ENCODE measurements at regions of chr5 and their contacts with region 1.

Region 1: DNA sequence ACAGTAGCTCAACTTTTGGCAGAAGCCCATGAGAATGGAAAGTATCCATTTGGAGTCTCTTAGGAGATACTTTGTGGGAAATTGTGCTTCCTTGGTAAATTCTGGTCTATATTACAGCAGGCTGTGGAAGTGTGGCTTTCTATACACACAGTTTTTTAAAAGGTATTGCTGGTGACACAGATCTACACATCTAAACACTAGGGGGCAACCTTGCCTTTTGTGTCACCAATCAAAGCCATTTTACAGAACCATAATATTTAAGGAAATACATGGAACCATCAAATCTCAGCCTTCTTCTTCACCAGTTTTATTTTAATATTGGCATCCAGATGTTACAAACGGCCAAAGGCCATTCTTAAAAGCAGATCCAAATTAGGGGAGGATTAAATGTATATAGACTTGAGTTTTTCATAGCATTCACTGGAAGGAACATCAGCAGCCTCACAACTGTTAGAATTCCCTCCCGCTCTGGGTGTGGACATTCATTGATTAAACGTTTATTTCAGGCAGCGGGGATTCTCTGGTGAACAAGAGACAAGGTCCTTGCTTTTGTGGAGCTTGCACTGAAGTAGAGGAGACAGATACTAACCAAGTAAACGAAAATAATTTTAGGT is 132.4 kb upstream of the EPB41L4A start:
- DNase-seq: no peak
- ATAC-seq: no peak

Region 2: DNA sequence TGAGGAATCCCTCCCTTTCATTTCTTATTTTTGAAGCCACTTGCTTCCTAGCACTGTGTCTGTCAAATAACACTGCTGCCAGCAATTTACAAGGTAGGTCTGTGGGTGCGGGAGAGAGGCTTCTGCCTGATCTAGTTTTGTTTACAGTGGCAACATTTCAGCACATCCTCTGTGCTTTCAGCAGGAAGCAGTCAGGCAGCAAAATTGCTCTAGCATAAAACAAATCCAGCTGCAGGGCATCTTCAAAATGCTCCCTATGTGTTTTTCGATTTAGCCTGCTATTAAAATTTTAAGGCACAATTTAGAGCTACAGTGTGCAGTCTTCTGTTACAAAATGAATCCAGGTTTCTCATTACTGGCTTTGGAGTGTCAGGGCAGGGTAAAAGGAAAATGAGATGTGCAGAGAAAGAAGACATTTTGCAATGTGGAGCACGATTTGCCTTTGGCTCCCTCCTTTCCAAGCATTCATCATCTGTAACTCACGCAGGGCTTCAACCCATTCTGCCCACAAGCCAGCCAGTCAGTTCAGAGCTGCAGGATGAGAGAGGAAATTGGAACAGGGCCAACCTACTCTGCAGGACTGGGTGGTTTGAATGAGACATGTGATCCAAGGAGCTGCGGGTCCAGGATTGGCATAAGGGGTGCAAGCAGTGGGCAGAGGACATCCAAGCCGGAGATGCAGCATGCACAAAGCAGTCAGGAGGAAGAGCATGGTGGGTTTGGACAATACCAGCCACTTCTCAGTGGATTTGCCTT is 42.7 kb after region 1 on chr5:
- intact Hi-C with region 1: no loop called
- DNase-seq: no peak
- ATAC-seq: no peak

Region 3: GRCh38 chr5:112604732-112605630 is 53.5 kb after region 1 on chr5:
- intact Hi-C with region 1: loop called (anchors 5 kb)
- DNase-seq: no peak
- ATAC-seq: peak; percentile 46

Region 4: GRCh38 chr5:112757468-112758208 is 206.1 kb after region 1 on chr5:
- intact Hi-C with region 1: loop called (anchors 1 kb)
- DNase-seq: no peak
- ATAC-seq: peak; percentile 71

Region 5: GRCh38 chr5:112848116-112848811 is 296.7 kb after region 1 on chr5:
- intact Hi-C with region 1: loop called (anchors 5 kb)
- DNase-seq: no peak
- ATAC-seq: peak; percentile 87

Region 6: DNA sequence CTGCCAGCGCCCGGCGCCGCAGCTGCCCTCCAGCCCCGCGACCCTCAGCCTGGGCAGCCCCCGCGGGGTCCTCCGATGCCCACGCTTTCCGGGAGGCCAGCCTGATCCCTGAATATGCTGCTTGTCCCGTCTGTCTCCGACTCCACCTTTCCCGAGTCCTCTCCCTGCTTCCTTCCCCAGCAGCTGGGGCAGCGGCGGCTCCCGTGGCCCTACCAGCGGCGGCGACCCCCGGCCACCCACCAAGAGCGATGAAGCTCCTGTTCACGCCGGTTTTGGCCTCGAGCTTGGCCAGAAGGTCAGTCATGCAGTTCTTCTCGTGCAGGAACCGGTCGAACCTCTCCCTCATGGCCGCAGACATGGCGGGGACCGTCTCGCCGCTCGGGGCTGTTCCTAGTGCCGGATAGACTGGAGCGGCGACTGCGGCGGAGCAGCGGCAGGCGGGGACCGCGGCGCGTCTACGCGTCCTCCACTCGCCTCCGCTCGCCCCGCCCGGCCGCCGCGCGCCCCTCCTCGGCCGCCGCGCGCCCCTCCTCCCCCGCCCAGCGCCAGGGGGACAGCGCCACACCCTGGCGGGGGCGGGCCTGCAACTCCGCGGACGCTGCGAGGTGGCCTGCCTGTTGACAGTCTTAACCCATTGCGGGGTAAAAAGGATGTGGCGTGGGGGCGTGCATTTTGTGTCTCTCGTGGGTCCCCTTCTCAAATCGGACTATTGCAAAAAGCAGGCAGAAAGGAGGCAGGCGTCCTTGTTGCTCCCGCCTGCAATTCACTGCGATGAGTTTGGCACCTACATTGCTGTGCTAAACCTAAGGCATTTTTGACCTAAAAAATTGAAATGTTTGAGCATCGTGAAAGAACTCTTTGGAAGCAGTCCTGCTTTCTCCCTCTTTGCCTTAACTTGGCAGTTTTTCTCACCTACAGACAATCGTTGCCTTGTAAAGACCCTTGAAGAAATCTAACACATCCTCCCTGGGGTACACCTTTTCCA is 370.6 kb after region 1 on chr5 and contains the start of gene REEP5:
- intact Hi-C with region 1: loop called (anchors 5 kb)
- DNase-seq: peak; percentile 94
- ATAC-seq: peak; percentile 97
- total RNA-seq, gene REEP5: 125 TPM

Region 7: GRCh38 chr5:113606298-113607134 is 1055.0 kb after region 1 on chr5:
- intact Hi-C with region 1: loop called (anchors 10 kb)
- DNase-seq: no peak
- ATAC-seq: peak; percentile 94